Endothelial cell of umbilical vein (primary cell): ENCODE measurements at regions of chr12 and their contacts with region 1.

Region 1: DNA sequence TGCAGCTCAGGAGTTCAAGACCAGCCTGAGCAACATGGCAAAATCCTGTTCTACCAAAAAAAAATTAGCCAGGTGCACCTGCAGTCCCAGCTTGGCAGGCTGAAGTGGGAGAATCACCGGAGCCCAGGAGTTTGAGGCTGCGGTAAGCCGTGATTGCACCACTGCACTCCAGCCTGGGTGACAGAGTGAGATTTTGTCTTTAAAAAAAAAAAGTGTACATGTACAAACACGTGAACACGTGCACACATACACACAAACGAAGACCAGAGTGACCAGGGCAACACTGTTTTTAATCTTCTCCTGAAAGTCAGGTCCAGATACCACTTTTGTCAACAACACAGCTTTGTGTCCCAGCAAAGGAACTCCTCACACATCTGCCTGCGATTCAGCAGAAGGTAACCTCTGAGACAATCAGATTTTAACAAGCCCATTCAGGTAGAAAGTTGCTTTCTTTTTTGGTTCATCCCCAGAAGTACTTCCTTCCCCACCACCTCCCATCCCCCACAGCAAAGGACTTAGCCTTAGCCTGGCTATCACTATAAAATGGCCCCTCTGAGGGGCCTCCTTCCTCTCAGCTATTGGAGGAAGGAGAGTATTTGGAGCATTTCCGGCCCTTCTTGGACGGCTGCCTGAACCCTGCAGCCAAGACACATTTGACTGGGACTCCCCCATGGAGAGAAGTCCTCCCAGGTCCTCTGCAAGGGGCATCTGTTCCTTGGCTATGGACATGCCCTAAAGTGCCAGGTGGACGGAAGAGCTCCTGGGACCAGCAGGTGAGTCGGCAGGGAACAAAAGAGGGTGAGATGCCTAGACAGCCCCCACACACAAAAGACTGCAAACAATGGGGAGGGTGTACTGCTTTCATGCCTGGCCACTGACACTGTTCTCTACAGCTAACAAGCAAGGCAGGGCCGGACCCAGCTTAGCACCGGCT is 9.8 kb downstream of the CTDSP2 start:
- DNase-seq: peak; percentile 85
- H3K4me3 ChIP-seq: peak overlapping the region in 1 of 3 experiments; percentile 14
- H3K27ac ChIP-seq: peak overlapping the region; percentile 34
- H3K4me1 ChIP-seq: peaks cover 64% of the 10 kb centered on the region
- H3K27me3 ChIP-seq: no peaks in the 10 kb centered on the region
- CTCF ChIP-seq: no peak
- POLR2A ChIP-seq: no peak

Region 2: GRCh38 chr12:57803319-57803893 is 33.3 kb before region 1 on chr12:
- CTCF ChIA-PET with region 1: interaction called, 7 read pairs
- POLR2A ChIA-PET with region 1: no interaction called
- dilution Hi-C with region 1: no loop called
- intact Hi-C with region 1: loop called (anchors 1 kb)
- DNase-seq: peak; percentile 60
- H3K4me3 ChIP-seq: no peak overlapping the region
- H3K27ac ChIP-seq: no peak overlapping the region
- H3K4me1 ChIP-seq: no peaks in the 10 kb centered on the region
- H3K27me3 ChIP-seq: no peaks in the 10 kb centered on the region
- CTCF ChIP-seq: peak; percentile 81 to 83
- POLR2A ChIP-seq: no peak

Region 3: GRCh38 chr12:57846577-57847319 is 10.0 kb after region 1 on chr12 and contains the start of gene CTDSP2:
- CTCF ChIA-PET with region 1: interaction called, 23 read pairs
- POLR2A ChIA-PET with region 1: interaction called, 13 read pairs
- dilution Hi-C with region 1: no loop called
- intact Hi-C with region 1: loop called (anchors 1 kb)
- DNase-seq: peak; percentile 96
- H3K4me3 ChIP-seq: peak within 1 kb of the TSS; percentile 88 to 100 (median 93)
- H3K27ac ChIP-seq: peak within 1 kb of the TSS; percentile 85
- H3K4me1 ChIP-seq: peaks cover 27% of the 10 kb centered on the region
- H3K27me3 ChIP-seq: peaks cover 9% of the 10 kb centered on the region in 2 experiments
- CTCF ChIP-seq: no peak
- POLR2A ChIP-seq: peak; percentile 52
- total RNA-seq, gene CTDSP2: 128 and 142 TPM in 2 replicates

Region 4: DNA sequence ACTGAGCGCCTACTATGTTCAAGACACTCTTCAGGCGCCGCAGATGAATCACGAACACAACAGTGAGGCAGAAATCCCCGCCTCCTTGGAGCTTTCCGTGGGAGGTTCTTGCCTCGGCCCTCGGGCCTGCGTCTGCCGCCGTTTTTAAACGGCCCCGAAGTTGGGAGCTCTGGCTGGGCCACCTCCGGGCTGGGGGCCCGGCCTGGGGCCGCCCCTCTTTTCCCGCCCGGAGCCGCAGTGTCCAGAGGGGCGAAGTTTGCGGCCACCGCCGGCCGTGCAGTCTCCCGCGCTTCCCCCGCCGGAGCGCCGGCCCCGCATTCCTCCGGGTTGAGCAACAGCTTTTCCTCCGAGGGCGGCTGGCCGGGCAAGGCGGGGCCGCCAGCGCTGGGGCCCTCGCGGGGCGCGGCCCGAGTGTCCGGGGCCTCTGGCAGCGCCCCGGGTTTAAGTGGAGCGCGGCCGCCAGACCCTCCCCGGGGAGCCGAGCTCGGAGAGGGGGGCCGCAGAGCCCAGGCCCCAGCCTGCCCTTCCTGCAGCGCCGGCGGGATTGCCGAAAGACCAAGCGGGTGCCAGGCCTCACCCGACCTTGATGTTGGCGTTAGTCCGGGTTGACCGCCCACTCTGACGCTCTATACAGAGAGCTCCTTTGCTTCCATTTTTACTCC is 28.5 kb after region 1 on chr12:
- CTCF ChIA-PET with region 1: interaction called, 14 read pairs
- POLR2A ChIA-PET with region 1: interaction called, 10 read pairs
- dilution Hi-C with region 1: no loop called
- intact Hi-C with region 1: loop called (anchors 1 kb)
- DNase-seq: peak; percentile 81
- H3K4me3 ChIP-seq: peak overlapping the region; percentile 19 to 51 (median 38)
- H3K27ac ChIP-seq: peak overlapping the region; percentile 82
- H3K4me1 ChIP-seq: peaks cover 8% of the 10 kb centered on the region
- H3K27me3 ChIP-seq: no peaks in the 10 kb centered on the region
- CTCF ChIP-seq: no peak
- POLR2A ChIP-seq: peak; percentile 75

Region 5: GRCh38 chr12:57888409-57889157 is 51.9 kb after region 1 on chr12:
- CTCF ChIA-PET with region 1: interaction called, 139 read pairs
- POLR2A ChIA-PET with region 1: no interaction called
- dilution Hi-C with region 1: no loop called
- intact Hi-C with region 1: loop called (anchors 2 kb)
- DNase-seq: peak; percentile 56
- H3K4me3 ChIP-seq: no peak overlapping the region
- H3K27ac ChIP-seq: no peak overlapping the region
- H3K4me1 ChIP-seq: peaks cover 17% of the 10 kb centered on the region
- H3K27me3 ChIP-seq: no peaks in the 10 kb centered on the region
- CTCF ChIP-seq: no peak
- POLR2A ChIP-seq: no peak

Region 6: GRCh38 chr12:57899010-57899662 is 62.4 kb after region 1 on chr12:
- CTCF ChIA-PET with region 1: interaction called, 139 read pairs
- POLR2A ChIA-PET with region 1: interaction called, 10 read pairs
- dilution Hi-C with region 1: no loop called
- intact Hi-C with region 1: loop called (anchors 1 kb)
- DNase-seq: peak; percentile 59
- H3K4me3 ChIP-seq: no peak overlapping the region
- H3K27ac ChIP-seq: no peak overlapping the region
- H3K4me1 ChIP-seq: peaks cover 28% of the 10 kb centered on the region
- H3K27me3 ChIP-seq: no peaks in the 10 kb centered on the region
- CTCF ChIP-seq: no peak
- POLR2A ChIP-seq: no peak

Region 7: DNA sequence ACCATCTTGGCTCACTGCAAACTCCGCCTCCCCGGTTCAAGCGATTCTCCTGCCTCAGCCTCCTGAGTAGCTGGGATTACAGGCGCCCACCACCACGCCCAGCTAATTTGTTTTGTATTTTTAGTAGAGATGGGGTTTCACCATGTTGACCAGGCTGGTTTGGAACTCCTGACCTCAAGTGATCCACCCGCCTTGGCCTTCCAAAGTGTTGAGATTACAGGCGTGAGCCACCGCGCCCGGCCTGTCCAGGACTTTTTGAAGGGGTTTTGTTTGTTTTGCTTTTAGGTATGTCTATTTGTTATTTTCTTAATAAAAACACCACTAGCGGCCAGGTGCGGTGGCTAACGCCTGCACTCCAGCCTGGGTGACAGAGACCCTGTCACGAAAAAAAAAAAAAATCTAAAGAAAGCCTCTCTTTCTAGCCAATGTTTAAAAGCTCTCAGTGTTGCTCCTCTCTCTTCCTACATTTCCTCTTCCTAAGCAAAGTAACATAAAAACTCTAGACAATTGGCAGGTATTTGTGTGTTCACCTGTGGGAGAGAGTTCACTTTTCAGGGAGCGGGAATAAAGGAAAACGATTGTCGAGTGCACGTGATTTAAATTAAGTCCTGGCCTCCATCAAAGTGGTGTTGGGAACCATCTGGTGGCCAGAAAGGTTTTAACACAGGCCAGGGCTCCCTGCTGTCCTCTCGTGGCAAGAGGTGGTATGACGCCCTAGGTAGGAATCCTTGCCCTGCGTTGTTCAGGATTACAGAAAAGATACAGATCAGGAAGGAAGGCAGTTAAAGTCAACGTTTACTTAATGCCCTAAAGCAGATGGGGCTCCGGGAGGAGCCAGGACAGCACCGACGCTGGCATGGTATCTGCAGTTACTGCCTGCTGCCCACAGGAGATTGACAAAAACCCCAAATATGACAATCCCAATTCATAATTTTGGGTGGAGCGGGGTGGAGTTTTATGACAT is 68.4 kb after region 1 on chr12:
- CTCF ChIA-PET with region 1: interaction called, 22 read pairs
- POLR2A ChIA-PET with region 1: no interaction called
- dilution Hi-C with region 1: no loop called
- intact Hi-C with region 1: loop called (anchors 1 kb)
- DNase-seq: peak; percentile 92
- H3K4me3 ChIP-seq: no peak overlapping the region
- H3K27ac ChIP-seq: no peak overlapping the region
- H3K4me1 ChIP-seq: peaks cover 2% of the 10 kb centered on the region
- H3K27me3 ChIP-seq: peaks cover 12 to 14% of the 10 kb centered on the region in 2 experiments
- CTCF ChIP-seq: peak; percentile 100
- POLR2A ChIP-seq: no peak